Sigmoid colon (tissue), 7 donors: ENCODE measurements at regions of chr15 and their contacts with region 1.

Region 1: DNA sequence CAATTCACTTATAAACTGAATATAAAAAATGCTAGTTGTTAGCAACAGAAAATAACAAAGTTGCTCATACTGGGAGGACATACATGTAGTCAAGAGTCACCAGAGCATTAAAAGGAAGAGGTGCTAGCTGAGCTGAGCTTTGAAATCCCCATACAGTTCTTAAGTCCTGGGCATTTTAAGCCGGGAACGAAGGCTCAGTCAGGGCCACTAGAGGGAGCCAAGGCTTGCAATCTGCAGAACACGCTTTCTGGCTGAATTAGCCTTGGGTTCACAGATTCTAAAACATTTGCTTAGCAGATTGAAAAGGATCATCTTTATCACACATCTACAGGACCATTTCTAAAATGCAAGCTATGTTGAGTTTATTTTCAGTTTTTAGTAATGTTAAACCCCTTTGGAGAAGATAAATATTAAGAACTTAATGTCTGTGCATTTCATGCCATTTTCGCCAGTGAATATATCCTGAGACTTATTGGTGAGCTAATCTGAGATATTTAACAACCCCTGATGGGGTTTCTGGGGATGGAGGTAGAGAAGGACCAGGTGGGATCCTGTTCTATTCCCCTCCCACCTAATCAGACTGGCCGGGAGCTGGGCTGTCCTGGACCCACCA is 26.3 kb upstream of the MNS1 start:
- DNase-seq: peak; percentile 75
- H3K4me3 ChIP-seq: no peak overlapping the region
- H3K27ac ChIP-seq: no peak overlapping the region
- H3K4me1 ChIP-seq: no peaks in the 10 kb centered on the region
- H3K27me3 ChIP-seq: no peaks in the 10 kb centered on the region
- CTCF ChIP-seq: peak in 3 of 4 experiments; percentile 45 to 71 (median 46)
- EP300 ChIP-seq: no peak
- POLR2A ChIP-seq: no peak

Region 2: DNA sequence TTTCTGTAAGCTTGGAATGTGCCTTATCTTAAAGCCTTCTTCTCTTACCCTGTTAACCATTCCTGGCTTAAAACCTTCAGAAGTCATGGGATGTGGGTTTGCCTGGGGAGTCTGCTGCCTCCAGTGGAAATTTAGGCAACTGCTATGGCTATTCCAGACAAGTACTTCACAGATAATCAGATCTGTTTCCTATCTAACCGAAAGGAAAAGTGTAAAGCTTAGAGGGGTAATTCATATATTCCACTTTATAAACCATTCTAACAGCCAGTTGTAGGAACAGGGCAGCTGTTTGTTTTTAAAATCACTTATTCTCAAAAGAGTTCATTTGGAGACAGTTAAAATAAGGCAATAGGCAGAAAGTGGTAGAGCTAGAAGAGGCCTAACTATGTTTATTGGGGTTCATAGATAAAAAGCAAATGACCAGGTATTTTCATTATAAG is 647.2 kb after region 1 on chr15:
- intact Hi-C with region 1: loop called (anchors 10 kb)
- DNase-seq: no peak
- H3K4me3 ChIP-seq: no peak overlapping the region
- H3K27ac ChIP-seq: no peak overlapping the region
- H3K4me1 ChIP-seq: peaks cover 0 to 25% (median 19%) of the 10 kb centered on the region in 4 donors
- H3K27me3 ChIP-seq: no peaks in the 10 kb centered on the region
- CTCF ChIP-seq: peak; percentile 16 to 70 (median 64)
- EP300 ChIP-seq: no peak
- POLR2A ChIP-seq: no peak

Region 3: DNA sequence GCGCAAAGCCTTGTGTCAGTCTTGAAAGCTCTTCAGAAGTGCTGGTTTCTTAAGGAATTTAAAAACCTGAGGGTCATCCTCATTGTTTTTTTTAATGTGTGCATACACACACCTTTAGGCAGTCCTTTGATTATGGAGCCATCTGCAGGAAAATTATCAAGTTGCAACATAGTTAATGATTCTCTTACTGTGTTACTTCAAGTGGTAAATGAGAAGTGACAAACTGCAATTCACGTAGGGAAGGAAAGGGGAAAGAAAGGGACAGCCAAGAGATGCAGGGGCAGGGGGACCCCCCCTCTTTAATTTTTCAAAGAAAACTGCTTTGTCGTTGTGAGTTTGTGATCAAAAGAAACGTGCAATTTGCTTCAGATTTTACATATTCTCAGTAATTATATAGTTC is 722.6 kb after region 1 on chr15:
- intact Hi-C with region 1: loop called (anchors 10 kb)
- DNase-seq: no peak
- H3K4me3 ChIP-seq: no peak overlapping the region
- H3K27ac ChIP-seq: no peak overlapping the region
- H3K4me1 ChIP-seq: peaks cover 0 to 58% (median 31%) of the 10 kb centered on the region in 4 donors
- H3K27me3 ChIP-seq: no peaks in the 10 kb centered on the region
- CTCF ChIP-seq: peak in 3 of 4 experiments; percentile 32 to 47 (median 46)
- EP300 ChIP-seq: no peak
- POLR2A ChIP-seq: no peak

Region 4: GRCh38 chr15:57319226-57319918 is 828.2 kb after region 1 on chr15:
- intact Hi-C with region 1: loop called (anchors 5 kb)
- DNase-seq: no peak
- H3K4me3 ChIP-seq: no peak overlapping the region
- H3K27ac ChIP-seq: no peak overlapping the region
- H3K4me1 ChIP-seq: peaks cover 0 to 4% (median 0%) of the 10 kb centered on the region in 4 donors
- H3K27me3 ChIP-seq: no peaks in the 10 kb centered on the region
- CTCF ChIP-seq: no peak
- EP300 ChIP-seq: no peak
- POLR2A ChIP-seq: no peak